ENCODE measurements at regions of chr18 and their contacts with region 1.

Region 1: GRCh38 chr18:43563780-43564179 is 286.5 kb upstream of the SYT4 start:
- DNase-seq: peak; percentile 38
- ATAC-seq: peak; percentile 65
- H3K4me3 ChIP-seq: no peak overlapping the region
- H3K27ac ChIP-seq: no peak overlapping the region
- H3K4me1 ChIP-seq: no peaks in the 10 kb centered on the region
- H3K27me3 ChIP-seq: no peaks in the 10 kb centered on the region
- CTCF ChIP-seq: peak; percentile 54

Region 2: DNA sequence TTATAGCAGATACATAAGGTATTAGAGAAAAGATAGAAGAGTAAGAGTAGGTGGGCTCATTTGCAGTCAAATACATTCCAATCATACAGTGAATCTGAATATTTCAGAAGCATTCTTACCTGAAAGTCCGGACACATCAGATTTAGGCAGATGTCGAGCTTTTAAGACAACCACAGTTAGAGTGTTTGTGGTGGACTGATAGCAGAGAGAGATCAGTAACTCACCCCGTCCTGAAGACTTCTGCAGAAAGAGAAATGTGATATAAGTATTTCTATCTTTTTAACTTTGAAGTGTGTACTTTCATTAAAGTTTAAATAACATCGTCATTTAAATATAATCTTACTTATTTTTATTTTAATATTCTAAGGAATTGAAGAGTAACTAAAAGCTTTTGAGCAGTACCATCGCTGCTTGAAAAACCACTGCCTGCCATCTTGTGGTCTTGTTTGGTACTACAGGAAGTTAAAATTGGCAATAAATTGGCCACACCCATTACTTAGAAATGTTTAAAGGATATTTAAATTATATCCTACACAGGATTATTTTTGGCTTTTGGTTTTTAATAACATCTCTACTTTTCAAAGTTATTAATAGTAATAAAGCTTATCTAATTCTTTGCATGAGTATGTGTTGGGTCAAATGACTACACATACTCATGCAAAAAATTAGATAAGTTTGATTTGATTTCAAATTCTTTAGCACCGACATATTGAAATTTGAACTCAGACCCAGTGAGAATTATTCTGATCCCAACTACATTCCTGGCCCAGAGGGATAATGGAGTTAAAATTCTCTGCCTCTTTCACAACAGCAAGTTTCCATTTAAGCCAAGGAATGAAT is 292.0 kb before region 1 on chr18:
- CTCF ChIA-PET with region 1: no interaction called
- POLR2A ChIA-PET with region 1: no interaction called
- intact Hi-C with region 1: loop called (anchors 5 kb)
- DNase-seq: peak; percentile 60
- ATAC-seq: no peak
- H3K4me3 ChIP-seq: no peak overlapping the region
- H3K27ac ChIP-seq: no peak overlapping the region
- H3K4me1 ChIP-seq: no peaks in the 10 kb centered on the region
- H3K27me3 ChIP-seq: no peaks in the 10 kb centered on the region
- CTCF ChIP-seq: peak; percentile 39; the same call in 1 of the 2 replicates

Region 3: GRCh38 chr18:43501099-43501498 is 62.7 kb before region 1 on chr18:
- CTCF ChIA-PET with region 1: no interaction called
- POLR2A ChIA-PET with region 1: no interaction called
- intact Hi-C with region 1: no loop called
- DNase-seq: no peak
- ATAC-seq: no peak
- H3K4me3 ChIP-seq: no peak overlapping the region
- H3K27ac ChIP-seq: no peak overlapping the region
- H3K4me1 ChIP-seq: no peaks in the 10 kb centered on the region
- H3K27me3 ChIP-seq: no peaks in the 10 kb centered on the region
- CTCF ChIP-seq: no peak

Measured in PC-3 (cell line).